Aorta (tissue), 5 donors: ENCODE measurements at regions of chr11 and their contacts with region 1.

Region 1: GRCh38 chr11:128630367-128631230 is 43.2 kb upstream of the ETS1 start:
- DNase-seq: peak; percentile 95 to 97
- ATAC-seq: peak; percentile 92
- H3K4me3 ChIP-seq: no peak overlapping the region
- H3K27ac ChIP-seq: peak overlapping the region in 1 of 2 donors; percentile 2
- H3K4me1 ChIP-seq: no peaks in the 10 kb centered on the region
- H3K27me3 ChIP-seq: no peaks in the 10 kb centered on the region

Region 2: GRCh38 chr11:128026596-128026995 is 604.0 kb before region 1 on chr11:
- intact Hi-C with region 1: loop called (anchors 2 to 10 kb)
- DNase-seq: no peak
- ATAC-seq: no peak
- H3K4me3 ChIP-seq: no peak overlapping the region
- H3K27ac ChIP-seq: no peak overlapping the region
- H3K4me1 ChIP-seq: peaks cover 0 to 3% of the 10 kb centered on the region in 2 donors
- H3K27me3 ChIP-seq: no peaks in the 10 kb centered on the region

Region 3: GRCh38 chr11:128039140-128040021 is 591.2 kb before region 1 on chr11:
- intact Hi-C with region 1: loop called in 1 of 2 experiments (anchors 10 kb)
- DNase-seq: peak in 1 of 2 donors; percentile 76
- ATAC-seq: no peak
- H3K4me3 ChIP-seq: no peak overlapping the region
- H3K27ac ChIP-seq: no peak overlapping the region
- H3K4me1 ChIP-seq: no peaks in the 10 kb centered on the region
- H3K27me3 ChIP-seq: no peaks in the 10 kb centered on the region

Region 4: DNA sequence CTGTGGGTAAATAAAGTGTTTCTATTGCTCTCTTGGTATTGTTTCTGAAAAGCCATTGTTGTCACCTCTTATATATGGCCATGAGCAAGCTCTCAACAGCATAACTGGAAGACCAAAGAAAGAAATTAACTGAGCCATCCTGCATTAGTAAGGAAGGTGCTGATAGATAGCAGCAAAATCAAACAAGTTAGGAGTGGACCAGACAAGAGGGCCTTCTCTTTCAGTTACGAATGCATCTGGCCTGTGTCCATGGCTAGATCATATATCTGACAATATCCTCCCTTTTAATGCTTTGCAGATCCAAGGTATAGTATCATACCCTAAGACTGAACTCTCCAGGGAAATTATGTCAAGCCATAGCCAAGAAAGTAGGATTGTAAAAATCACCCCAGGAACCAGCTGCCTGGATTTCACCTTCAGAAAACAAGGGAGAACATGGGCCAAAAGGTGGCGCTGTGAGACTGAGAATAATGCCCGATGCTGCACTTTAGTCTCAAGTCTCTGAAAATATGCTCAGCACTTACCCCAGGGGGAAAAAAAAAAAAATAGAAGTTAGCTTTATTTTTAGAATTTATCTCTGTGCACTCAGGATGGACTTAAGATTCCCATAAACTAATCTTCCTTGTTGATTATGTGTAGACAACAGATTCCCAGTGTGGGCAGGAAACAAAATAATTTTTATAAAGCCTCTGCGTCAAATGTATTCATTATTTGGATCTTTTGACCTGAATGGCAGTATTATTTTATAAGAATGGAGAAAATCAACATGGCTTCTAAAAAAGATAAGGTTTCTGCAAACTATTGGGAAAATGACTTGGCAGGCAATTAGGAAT is 458.3 kb before region 1 on chr11:
- intact Hi-C with region 1: loop called (anchors 2 to 5 kb)
- DNase-seq: peak; percentile 84 to 91
- ATAC-seq: peak; percentile 83
- H3K4me3 ChIP-seq: no peak overlapping the region
- H3K27ac ChIP-seq: no peak overlapping the region
- H3K4me1 ChIP-seq: no peaks in the 10 kb centered on the region
- H3K27me3 ChIP-seq: peaks cover 0 to 2% of the 10 kb centered on the region in 2 donors

Region 5: GRCh38 chr11:128379587-128380580 is 250.7 kb before region 1 on chr11:
- intact Hi-C with region 1: no loop called
- DNase-seq: no peak
- ATAC-seq: no peak
- H3K4me3 ChIP-seq: no peak overlapping the region
- H3K27ac ChIP-seq: no peak overlapping the region
- H3K4me1 ChIP-seq: no peaks in the 10 kb centered on the region
- H3K27me3 ChIP-seq: no peaks in the 10 kb centered on the region

Region 6: GRCh38 chr11:128669506-128670270 is 39.1 kb after region 1 on chr11:
- intact Hi-C with region 1: no loop called
- DNase-seq: no peak
- ATAC-seq: no peak
- H3K4me3 ChIP-seq: no peak overlapping the region
- H3K27ac ChIP-seq: no peak overlapping the region
- H3K4me1 ChIP-seq: no peaks in the 10 kb centered on the region
- H3K27me3 ChIP-seq: no peaks in the 10 kb centered on the region

Region 7: DNA sequence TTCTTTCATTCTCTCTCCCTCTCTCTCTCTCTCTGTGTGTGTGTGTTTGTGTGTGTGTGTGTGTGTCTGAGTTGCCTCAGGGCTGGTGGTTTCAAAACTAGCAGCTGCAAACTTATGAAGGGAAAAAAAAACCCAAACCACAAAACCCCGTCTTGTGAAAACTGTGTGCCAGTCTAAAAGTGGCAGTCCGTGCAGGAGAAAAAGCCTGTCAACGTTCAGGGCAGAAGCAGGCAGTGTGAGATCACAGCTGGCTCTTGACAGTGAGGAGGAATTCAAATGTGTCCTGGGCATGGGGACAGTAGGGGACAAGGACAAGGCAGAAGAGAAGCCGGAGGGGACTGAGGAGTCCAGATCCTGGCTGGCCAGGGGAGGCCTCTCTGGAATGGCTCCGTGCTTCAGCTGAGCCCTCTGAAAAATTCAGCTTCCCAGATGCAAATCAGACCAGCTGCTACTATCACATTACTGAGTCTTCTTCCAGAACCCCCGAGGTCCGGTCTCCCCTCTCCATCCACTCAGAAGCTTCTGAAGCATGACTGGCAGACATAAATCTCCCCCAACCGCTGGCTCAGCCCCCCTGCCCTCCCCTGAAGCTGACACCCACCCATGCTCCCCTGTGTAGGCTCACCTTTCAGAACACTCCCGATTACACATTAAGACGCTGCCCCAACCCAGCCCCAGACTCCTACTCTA is 95.2 kb after region 1 on chr11:
- intact Hi-C with region 1: no loop called
- DNase-seq: peak in 1 of 2 donors; percentile 56
- ATAC-seq: no peak
- H3K4me3 ChIP-seq: no peak overlapping the region
- H3K27ac ChIP-seq: no peak overlapping the region
- H3K4me1 ChIP-seq: no peaks in the 10 kb centered on the region
- H3K27me3 ChIP-seq: no peaks in the 10 kb centered on the region

Region 8: GRCh38 chr11:129023970-129024676 is 393.5 kb after region 1 on chr11:
- intact Hi-C with region 1: no loop called
- DNase-seq: peak in 1 of 2 donors; percentile 44
- ATAC-seq: no peak
- H3K4me3 ChIP-seq: no peak overlapping the region
- H3K27ac ChIP-seq: no peak overlapping the region
- H3K4me1 ChIP-seq: peaks cover 0 to 3% of the 10 kb centered on the region in 2 donors
- H3K27me3 ChIP-seq: no peaks in the 10 kb centered on the region